Activated CD8-positive, alpha-beta memory T cell treated with anti-CD3 and anti-CD28 coated beads, Interleukin-2, amount 10 ng/mL, durations not matched to agents 7 days and 5 days (primary cell): ENCODE measurements at regions of chr9 and their contacts with region 1.

Region 1: DNA sequence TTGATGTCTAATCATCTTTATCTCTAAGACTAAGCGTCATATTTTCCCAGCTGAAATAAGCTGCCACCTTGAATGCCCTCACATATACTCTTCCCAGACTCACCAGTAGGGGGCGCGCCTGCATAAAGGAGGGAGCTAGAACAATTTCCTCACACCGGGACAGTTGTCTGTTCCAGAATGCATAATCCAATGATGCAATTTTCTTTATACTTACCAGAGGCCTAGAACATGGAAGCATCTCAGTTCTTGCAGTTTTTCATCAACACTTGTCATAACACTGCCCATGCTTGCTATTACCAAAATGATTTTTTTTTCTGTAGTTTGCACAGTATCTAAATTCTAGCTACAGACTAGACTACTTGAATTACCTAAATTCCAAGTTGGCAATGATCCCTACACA is 203.9 kb downstream of the FRMD3 start:
- DNase-seq: peak; percentile 79
- ATAC-seq: peak; percentile 81
- H3K4me3 Mint-ChIP-seq: no peak overlapping the region
- H3K27ac Mint-ChIP-seq: no peak overlapping the region
- H3K4me1 Mint-ChIP-seq: peaks cover 8% of the 10 kb centered on the region
- H3K27me3 Mint-ChIP-seq: no peaks in the 10 kb centered on the region

Region 2: GRCh38 chr9:83093939-83094338 is 240.4 kb before region 1 on chr9:
- CTCF ChIA-PET with region 1: no interaction called
- DNase-seq: no peak
- ATAC-seq: no peak
- H3K4me3 Mint-ChIP-seq: no peak overlapping the region
- H3K27ac Mint-ChIP-seq: no peak overlapping the region
- H3K4me1 Mint-ChIP-seq: no peaks in the 10 kb centered on the region
- H3K27me3 Mint-ChIP-seq: no peaks in the 10 kb centered on the region

Region 3: GRCh38 chr9:83315649-83316048 is 18.7 kb before region 1 on chr9:
- CTCF ChIA-PET with region 1: no interaction called
- DNase-seq: no peak
- ATAC-seq: no peak
- H3K4me3 Mint-ChIP-seq: no peak overlapping the region
- H3K27ac Mint-ChIP-seq: no peak overlapping the region
- H3K4me1 Mint-ChIP-seq: no peaks in the 10 kb centered on the region
- H3K27me3 Mint-ChIP-seq: peaks cover 5% of the 10 kb centered on the region

Region 4: GRCh38 chr9:83355024-83355444 is 20.7 kb after region 1 on chr9:
- CTCF ChIA-PET with region 1: interaction called, 11 read pairs
- DNase-seq: no peak
- ATAC-seq: no peak
- H3K4me3 Mint-ChIP-seq: no peak overlapping the region
- H3K27ac Mint-ChIP-seq: no peak overlapping the region
- H3K4me1 Mint-ChIP-seq: no peaks in the 10 kb centered on the region
- H3K27me3 Mint-ChIP-seq: no peaks in the 10 kb centered on the region

Region 5: DNA sequence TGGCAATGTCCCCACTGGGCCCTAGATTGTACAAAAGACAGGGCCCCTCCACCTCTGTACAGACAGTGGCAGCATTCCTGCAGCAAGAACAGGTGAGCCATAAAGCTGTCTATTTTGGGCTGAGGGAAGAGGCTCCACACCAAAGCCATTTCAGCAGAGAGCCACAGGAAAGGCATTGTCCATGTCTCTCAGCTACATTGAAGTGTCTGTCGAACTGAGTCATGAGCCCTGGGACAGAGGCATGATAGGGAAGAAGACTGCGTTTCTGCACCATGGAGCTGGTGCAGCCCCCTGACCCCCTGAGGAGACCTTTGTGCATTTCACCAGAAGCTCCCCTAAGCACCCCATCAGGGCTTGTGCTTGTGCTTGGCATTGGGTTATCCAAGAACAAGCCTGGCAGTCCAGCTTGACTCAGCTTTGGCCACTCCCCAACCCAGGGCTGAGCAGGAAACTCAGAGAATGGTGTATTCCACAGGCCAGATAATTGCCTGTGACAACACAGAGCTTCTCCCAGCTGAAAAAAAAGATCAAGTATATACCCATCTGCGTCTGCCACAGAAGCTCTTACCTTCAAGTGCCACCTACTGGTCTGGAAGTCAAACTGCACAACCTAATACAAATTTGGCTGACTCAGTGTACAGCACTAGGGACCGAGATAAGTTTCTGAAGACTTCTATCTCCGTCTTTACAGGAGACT is 209.8 kb after region 1 on chr9:
- CTCF ChIA-PET with region 1: interaction called, 93 read pairs
- DNase-seq: no peak
- ATAC-seq: peak; percentile 76
- H3K4me3 Mint-ChIP-seq: no peak overlapping the region
- H3K27ac Mint-ChIP-seq: no peak overlapping the region
- H3K4me1 Mint-ChIP-seq: no peaks in the 10 kb centered on the region
- H3K27me3 Mint-ChIP-seq: peaks cover 23% of the 10 kb centered on the region

Region 6: GRCh38 chr9:83596896-83597504 is 262.7 kb after region 1 on chr9:
- CTCF ChIA-PET with region 1: interaction called, 17 read pairs
- DNase-seq: peak; percentile 61
- ATAC-seq: no peak
- H3K4me3 Mint-ChIP-seq: no peak overlapping the region
- H3K27ac Mint-ChIP-seq: no peak overlapping the region
- H3K4me1 Mint-ChIP-seq: no peaks in the 10 kb centered on the region
- H3K27me3 Mint-ChIP-seq: no peaks in the 10 kb centered on the region